ENCODE measurements at regions of chr19 and their contacts with region 1.

Region 1: DNA sequence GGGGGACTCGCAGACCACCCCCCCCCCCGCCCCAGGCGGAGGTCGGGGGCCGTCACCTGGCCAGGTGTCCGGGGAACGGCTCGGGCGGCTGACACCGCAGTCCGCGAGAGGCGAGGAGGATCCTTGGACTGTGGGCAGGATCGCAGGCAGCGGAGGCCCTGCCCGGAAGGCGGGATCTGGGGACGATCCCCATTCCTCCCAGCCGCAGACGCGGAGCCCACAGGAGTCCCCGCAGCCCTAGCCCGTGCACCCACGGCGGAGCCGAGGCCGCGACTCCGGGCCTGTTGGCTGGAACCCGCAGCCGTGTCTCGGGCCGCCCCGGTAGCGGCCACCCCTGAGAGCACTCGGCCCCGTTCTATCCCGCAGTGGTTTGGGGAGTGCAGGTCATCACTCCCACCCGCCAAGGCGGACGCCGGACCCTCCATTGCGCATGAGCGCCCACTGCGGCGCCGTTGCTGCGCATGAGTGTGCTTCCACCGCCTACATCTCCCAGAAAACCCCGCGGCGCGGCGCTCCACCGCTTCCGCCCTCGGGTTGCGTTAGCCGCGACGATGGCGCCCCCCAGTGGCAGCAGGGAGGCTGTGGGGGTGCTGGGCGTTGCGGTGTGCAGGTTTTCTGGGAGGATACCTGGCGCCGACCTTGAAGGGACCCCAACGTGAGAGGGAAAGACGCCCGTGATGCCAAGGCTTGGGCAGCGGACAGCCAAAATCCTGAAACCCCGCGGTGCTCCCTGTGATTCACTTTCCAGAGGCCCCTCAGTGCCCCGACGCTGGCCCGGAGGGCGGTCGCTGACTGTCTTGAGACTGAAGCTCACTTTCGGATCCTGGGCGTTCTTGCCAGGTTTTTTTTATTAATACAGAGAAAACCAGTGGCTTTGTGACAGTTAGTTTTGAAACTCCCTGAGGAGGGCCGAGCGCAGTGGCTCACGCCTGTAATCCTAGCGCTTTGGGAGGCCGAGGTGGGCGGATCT is 4.4 kb upstream of the ZNF329 start:
- DNase-seq: peak; percentile 92 to 100 (median 98)
- ATAC-seq: peak; percentile 98
- H3K4me3 ChIP-seq: peak overlapping the region; percentile 97
- H3K4me3 Mint-ChIP-seq: peak overlapping the region; percentile 72 to 90 (median 84)
- H3K27ac ChIP-seq: peak overlapping the region; percentile 99
- H3K27ac Mint-ChIP-seq: peak overlapping the region; percentile 52 to 80 (median 73)
- H3K4me1 ChIP-seq: peaks cover 8 to 13% of the 10 kb centered on the region in 2 donors
- H3K4me1 Mint-ChIP-seq: peaks cover 6 to 33% (median 19%) of the 10 kb centered on the region in 7 donors
- H3K27me3 ChIP-seq: no peaks in the 10 kb centered on the region
- H3K27me3 Mint-ChIP-seq: no peaks in the 10 kb centered on the region

Region 2: DNA sequence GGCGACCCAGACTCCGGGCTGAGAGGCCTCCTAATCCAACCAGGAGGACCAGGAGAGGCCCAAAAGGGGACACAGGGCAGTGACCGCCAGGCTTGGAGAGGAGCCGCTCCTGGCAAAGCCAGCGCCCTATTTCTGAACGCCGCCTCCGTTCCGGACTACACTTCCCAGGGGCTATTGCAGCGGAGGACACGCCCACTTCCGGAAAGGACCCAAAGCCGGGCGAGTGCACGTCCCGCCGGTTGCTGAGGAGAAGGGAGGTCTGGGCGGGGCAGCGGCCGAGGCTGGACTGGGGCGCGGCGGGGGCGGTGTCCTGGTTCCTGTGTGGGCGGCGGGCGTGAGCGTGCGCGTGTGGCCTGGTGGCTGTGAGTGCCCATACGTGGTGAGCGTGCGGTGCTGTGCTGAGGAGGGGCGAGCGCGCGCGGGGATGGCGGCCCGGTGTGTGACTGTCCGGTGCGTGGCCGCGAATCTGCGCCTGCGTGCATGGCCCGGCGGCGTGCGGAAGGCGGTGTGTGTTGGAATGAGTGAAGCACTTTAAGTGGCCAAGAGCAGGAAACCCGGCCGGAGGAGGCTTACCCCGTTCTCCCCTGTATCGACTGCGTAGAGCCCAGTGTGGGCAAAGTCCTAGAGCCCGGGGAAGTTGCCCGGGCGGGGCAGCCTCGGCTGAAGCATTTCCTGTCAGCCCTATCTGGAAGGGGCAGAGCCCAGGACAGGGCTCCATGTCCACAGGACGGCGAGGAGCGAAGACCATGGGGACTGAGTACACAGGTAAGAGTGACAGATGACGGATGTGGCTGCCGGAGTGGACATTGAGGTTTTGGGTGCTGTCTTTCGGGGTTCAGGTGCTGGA is 1587.5 kb before region 1 on chr19 and contains the start of gene ZNF470:
- CTCF ChIA-PET with region 1: no interaction called
- POLR2A ChIA-PET with region 1: no interaction called
- intact Hi-C with region 1: loop called in 1 of 2 experiments (anchors 2 kb)
- DNase-seq: peak; percentile 73 to 86 (median 80)
- ATAC-seq: peak; percentile 98
- H3K4me3 ChIP-seq: peak within 1 kb of the TSS; percentile 86
- H3K4me3 Mint-ChIP-seq: peak within 1 kb of the TSS; percentile 89 to 98 (median 96)
- H3K27ac ChIP-seq: peak within 1 kb of the TSS; percentile 77
- H3K27ac Mint-ChIP-seq: peak within 1 kb of the TSS; percentile 59 to 91 (median 84)
- H3K4me1 ChIP-seq: peaks cover 0 to 9% of the 10 kb centered on the region in 2 donors
- H3K4me1 Mint-ChIP-seq: peaks cover 10 to 25% (median 13%) of the 10 kb centered on the region in 7 donors
- H3K27me3 ChIP-seq: no peaks in the 10 kb centered on the region
- H3K27me3 Mint-ChIP-seq: no peaks in the 10 kb centered on the region
- total RNA-seq, gene ZNF470: 0.98 to 5.9 (median 2.4) TPM

Region 3: DNA sequence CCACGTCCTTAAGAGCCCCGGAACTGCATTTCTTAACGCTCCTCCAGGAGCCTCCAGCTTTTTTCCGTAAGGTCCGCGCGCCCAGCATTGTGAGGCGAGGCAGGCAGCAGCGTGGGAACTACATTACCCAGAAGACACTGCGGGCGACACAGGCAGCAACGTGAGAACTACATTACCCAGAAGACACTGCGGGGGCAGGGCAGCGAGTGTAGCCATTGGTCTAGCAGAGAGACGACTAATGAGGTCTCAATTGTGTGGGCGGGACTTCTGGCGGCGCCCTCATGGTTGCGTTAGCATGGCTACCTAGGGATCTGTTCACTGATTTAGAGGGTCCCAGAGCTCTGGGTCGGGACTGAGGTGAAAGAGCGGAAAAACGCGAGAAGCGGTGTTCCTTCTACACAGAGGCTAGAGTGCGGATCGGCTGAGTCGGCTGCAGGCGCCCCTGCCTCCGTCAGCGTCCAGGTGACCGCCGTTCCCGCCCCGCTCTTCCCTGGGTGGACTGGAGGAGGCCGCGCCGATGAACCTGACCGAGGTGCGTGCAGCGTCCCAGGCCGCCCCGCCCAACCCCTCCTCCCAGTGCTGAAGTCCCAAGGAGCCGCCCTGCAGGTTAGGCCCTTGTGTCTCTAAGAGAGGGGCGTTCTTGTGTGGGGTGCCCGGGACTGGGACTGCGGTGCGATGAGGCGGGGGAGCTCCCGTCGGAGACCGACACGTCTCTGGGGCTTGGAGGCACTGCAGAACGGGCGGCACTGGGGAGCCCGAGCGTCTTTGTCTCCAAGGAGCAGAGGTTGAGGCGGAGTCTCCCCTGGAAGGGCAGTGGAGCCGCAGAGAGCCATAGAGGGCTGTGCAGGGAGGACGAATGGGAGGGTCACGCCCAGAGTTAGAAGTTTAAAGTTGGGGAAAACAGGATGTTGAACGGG is 719.6 kb before region 1 on chr19 and contains the start of gene ZNF749:
- CTCF ChIA-PET with region 1: no interaction called
- POLR2A ChIA-PET with region 1: no interaction called
- intact Hi-C with region 1: loop called (anchors 1 kb)
- DNase-seq: peak; percentile 76 to 100 (median 96)
- ATAC-seq: peak; percentile 100
- H3K4me3 ChIP-seq: peak within 1 kb of the TSS; percentile 75
- H3K4me3 Mint-ChIP-seq: peak within 1 kb of the TSS; percentile 92 to 100 (median 98)
- H3K27ac ChIP-seq: peak within 1 kb of the TSS; percentile 77
- H3K27ac Mint-ChIP-seq: peak within 1 kb of the TSS; percentile 79 to 98 (median 95)
- H3K4me1 ChIP-seq: peaks cover 7 to 14% of the 10 kb centered on the region in 2 donors
- H3K4me1 Mint-ChIP-seq: peaks cover 23 to 42% (median 38%) of the 10 kb centered on the region in 7 donors
- H3K27me3 ChIP-seq: no peaks in the 10 kb centered on the region
- H3K27me3 Mint-ChIP-seq: no peaks in the 10 kb centered on the region
- total RNA-seq, gene ZNF749: 8.9 to 17.9 (median 13.2) TPM

Region 4: GRCh38 chr19:57682226-57682766 is 472.7 kb before region 1 on chr19:
- CTCF ChIA-PET with region 1: no interaction called
- POLR2A ChIA-PET with region 1: interaction called, 3 read pairs
- intact Hi-C with region 1: loop called in 1 of 2 experiments (anchors 1 kb)
- DNase-seq: no peak
- ATAC-seq: no peak
- H3K4me3 ChIP-seq: peak overlapping the region; percentile 93
- H3K4me3 Mint-ChIP-seq: peak overlapping the region; percentile 89 to 99 (median 97)
- H3K27ac ChIP-seq: peak overlapping the region; percentile 80
- H3K27ac Mint-ChIP-seq: peak overlapping the region; percentile 90 to 98 (median 96)
- H3K4me1 ChIP-seq: peaks cover 9 to 13% of the 10 kb centered on the region in 2 donors
- H3K4me1 Mint-ChIP-seq: peaks cover 25 to 46% (median 39%) of the 10 kb centered on the region in 7 donors
- H3K27me3 ChIP-seq: no peaks in the 10 kb centered on the region
- H3K27me3 Mint-ChIP-seq: peaks cover 2 to 8% (median 7%) of the 10 kb centered on the region in 5 donors

Region 5: DNA sequence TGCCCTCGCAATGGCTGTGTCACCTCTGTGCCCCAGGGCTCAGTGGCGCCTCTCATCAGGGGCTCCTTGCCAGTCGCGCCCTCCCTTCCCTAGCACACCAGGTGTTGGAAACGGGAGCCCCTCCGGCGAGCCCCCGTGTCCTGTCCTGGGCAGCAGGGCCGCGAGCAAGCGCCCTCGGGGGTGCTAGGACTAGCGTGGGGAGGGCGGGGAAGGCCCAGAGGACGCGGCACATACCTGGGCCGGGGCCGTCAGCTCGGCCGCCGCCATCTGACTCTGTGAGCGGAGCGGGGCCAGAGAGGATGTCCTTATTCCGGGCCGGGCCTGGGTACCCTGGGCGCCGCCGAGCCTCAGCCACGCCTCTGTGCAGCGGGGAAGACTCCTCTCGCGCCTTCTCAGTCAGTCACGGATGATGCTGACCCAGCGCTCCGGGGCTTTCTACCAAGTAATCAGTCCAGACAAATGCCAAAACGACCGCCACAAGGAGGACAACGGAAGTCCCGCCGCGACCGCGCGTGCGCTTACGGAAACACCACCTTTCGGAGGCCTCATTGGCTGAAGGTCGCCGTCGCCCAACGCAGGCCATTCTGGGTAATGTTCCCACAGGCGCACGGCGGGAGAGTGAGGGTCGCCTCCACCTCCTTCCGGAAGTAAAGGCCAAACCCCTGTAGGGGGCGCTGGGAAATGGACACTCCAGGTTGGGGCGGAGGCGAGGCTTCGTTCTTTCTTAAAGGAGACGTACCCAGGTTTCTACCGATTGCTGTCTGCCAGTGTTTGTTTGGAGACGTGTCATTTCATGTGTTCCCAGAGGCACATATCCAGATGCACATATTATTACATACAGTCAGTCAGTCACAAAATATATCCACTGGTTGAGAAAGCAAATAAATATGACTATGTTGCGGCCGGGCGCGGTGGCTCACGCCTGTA is 207.5 kb before region 1 on chr19 and contains the start of gene ZNF256:
- CTCF ChIA-PET with region 1: no interaction called
- POLR2A ChIA-PET with region 1: no interaction called
- intact Hi-C with region 1: loop called in 1 of 2 experiments (anchors 1 kb)
- DNase-seq: peak; percentile 55 to 85 (median 77)
- ATAC-seq: peak; percentile 97
- H3K4me3 ChIP-seq: peak within 1 kb of the TSS; percentile 71
- H3K4me3 Mint-ChIP-seq: peak within 1 kb of the TSS; percentile 89 to 97 (median 95)
- H3K27ac ChIP-seq: peak within 1 kb of the TSS; percentile 80
- H3K27ac Mint-ChIP-seq: peak within 1 kb of the TSS; percentile 83 to 97 (median 92)
- H3K4me1 ChIP-seq: peaks cover 6 to 9% of the 10 kb centered on the region in 2 donors
- H3K4me1 Mint-ChIP-seq: peaks cover 10 to 28% (median 21%) of the 10 kb centered on the region in 7 donors
- H3K27me3 ChIP-seq: no peaks in the 10 kb centered on the region
- H3K27me3 Mint-ChIP-seq: peaks cover 0 to 4% (median 0%) of the 10 kb centered on the region in 5 donors
- total RNA-seq, gene ZNF256: 5.2 to 13.8 (median 11.8) TPM

Region 6: DNA sequence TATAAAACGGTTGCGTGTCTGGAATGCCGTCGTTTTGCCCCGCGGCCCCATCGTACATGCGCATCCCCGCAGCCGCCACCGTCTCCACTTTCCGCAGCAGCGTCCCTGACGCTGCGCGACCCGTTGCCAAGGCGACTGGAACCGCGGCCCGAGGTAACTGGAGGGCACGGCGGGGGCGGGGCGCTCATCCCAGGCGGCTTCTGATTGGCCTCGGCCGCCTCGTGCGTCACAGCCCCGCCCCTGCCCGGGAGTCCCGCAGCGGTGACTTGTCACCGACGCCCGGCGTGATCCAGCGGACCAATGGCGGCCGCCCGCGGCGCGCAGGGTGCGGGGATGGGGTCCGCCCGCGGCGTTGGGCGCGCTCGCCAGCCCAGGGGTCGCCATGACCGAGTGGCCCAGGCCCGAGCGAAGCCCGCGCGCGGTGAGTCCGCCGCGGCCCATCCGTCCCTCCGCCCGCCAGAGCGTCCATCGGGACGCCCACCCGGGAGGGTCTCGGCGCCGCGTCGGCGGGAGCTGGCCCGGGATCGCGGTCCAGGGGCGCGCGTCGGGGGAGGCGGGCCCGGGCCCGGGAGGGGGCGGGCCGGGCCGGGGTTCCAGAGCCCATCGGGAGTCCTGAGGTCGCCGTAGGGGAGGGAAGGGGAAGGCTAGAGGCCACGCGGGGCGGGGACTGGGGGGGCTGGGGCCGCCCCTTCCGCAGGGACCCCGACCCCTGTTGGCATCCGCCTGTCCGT is 121.1 kb before region 1 on chr19 and contains the start of gene ZSCAN1:
- CTCF ChIA-PET with region 1: no interaction called
- POLR2A ChIA-PET with region 1: no interaction called
- intact Hi-C with region 1: no loop called
- DNase-seq: peak in 2 of 9 donors; percentile 14 to 15
- ATAC-seq: peak; percentile 70
- H3K4me3 ChIP-seq: no peak within 1 kb of the TSS
- H3K4me3 Mint-ChIP-seq: peak within 1 kb of the TSS; percentile 8 to 81 (median 28)
- H3K27ac ChIP-seq: no peak within 1 kb of the TSS
- H3K27ac Mint-ChIP-seq: peak within 1 kb of the TSS in 1 of 9 donors; percentile 80
- H3K4me1 ChIP-seq: no peaks in the 10 kb centered on the region
- H3K4me1 Mint-ChIP-seq: peaks cover 0 to 4% (median 2%) of the 10 kb centered on the region in 7 donors
- H3K27me3 ChIP-seq: peaks cover 0 to 4% of the 10 kb centered on the region in 2 donors
- H3K27me3 Mint-ChIP-seq: peaks cover 3 to 48% (median 33%) of the 10 kb centered on the region in 5 donors
- total RNA-seq, gene ZSCAN1: not detected

Region 7: GRCh38 chr19:58091251-58091995 is 63.5 kb before region 1 on chr19:
- CTCF ChIA-PET with region 1: no interaction called
- POLR2A ChIA-PET with region 1: no interaction called
- intact Hi-C with region 1: no loop called
- DNase-seq: no peak
- ATAC-seq: no peak
- H3K4me3 ChIP-seq: no peak overlapping the region
- H3K4me3 Mint-ChIP-seq: no peak overlapping the region
- H3K27ac ChIP-seq: no peak overlapping the region
- H3K27ac Mint-ChIP-seq: peak overlapping the region in 1 of 9 donors; percentile 65
- H3K4me1 ChIP-seq: no peaks in the 10 kb centered on the region
- H3K4me1 Mint-ChIP-seq: peaks cover 0 to 5% (median under 1%) of the 10 kb centered on the region in 7 donors
- H3K27me3 ChIP-seq: no peaks in the 10 kb centered on the region
- H3K27me3 Mint-ChIP-seq: no peaks in the 10 kb centered on the region

Region 8: GRCh38 chr19:58519355-58520256 is 364.6 kb after region 1 on chr19 and contains the start of gene ZBTB45:
- CTCF ChIA-PET with region 1: no interaction called
- POLR2A ChIA-PET with region 1: interaction called, 3 read pairs
- intact Hi-C with region 1: loop called in 1 of 2 experiments (anchors 1 kb)
- DNase-seq: peak; percentile 81 to 97 (median 88)
- ATAC-seq: peak; percentile 89
- H3K4me3 ChIP-seq: peak within 1 kb of the TSS; percentile 76
- H3K4me3 Mint-ChIP-seq: peak within 1 kb of the TSS; percentile 90 to 97 (median 95)
- H3K27ac ChIP-seq: peak within 1 kb of the TSS; percentile 86
- H3K27ac Mint-ChIP-seq: peak within 1 kb of the TSS; percentile 92 to 99 (median 97)
- H3K4me1 ChIP-seq: peaks cover 10 to 14% of the 10 kb centered on the region in 2 donors
- H3K4me1 Mint-ChIP-seq: peaks cover 29 to 43% (median 37%) of the 10 kb centered on the region in 7 donors
- H3K27me3 ChIP-seq: no peaks in the 10 kb centered on the region
- H3K27me3 Mint-ChIP-seq: peaks cover 0 to 3% (median 0%) of the 10 kb centered on the region in 5 donors
- total RNA-seq, gene ZBTB45: 9.8 to 19.2 (median 17.0) TPM